ENCODE measurements at regions of chr3 and their contacts with region 1.

Region 1: GRCh38 chr3:180594631-180595558 is 7.1 kb upstream of the TTC14 start:
- DNase-seq: no peak
- ATAC-seq: no peak
- H3K4me3 ChIP-seq: no peak overlapping the region
- H3K27ac ChIP-seq: no peak overlapping the region
- H3K4me1 ChIP-seq: no peaks in the 10 kb centered on the region
- H3K27me3 ChIP-seq: peaks cover 0 to 51% (median 14%) of the 10 kb centered on the region in 7 donors
- CTCF ChIP-seq: peak in 6 of 9 donors; percentile 13 to 47 (median 22)

Region 2: GRCh38 chr3:179811321-179812095 is 783.4 kb before region 1 on chr3:
- intact Hi-C with region 1: loop called in 3 of 10 experiments (anchors 5 to 10 kb)
- DNase-seq: peak in 1 of 2 donors; percentile 23
- ATAC-seq: peak in 7 of 8 donors; percentile 55 to 88 (median 73)
- H3K4me3 ChIP-seq: no peak overlapping the region
- H3K27ac ChIP-seq: no peak overlapping the region
- H3K4me1 ChIP-seq: no peaks in the 10 kb centered on the region
- H3K27me3 ChIP-seq: no peaks in the 10 kb centered on the region
- CTCF ChIP-seq: peak; percentile 34 to 77 (median 65)